Testis (tissue), 5 donors: ENCODE measurements at regions of chr12 and their contacts with region 1.

Region 1: GRCh38 chr12:94532490-94533422 is 73.1 kb upstream of the CEP83 start:
- DNase-seq: peak; percentile 85
- H3K4me3 ChIP-seq: no peak overlapping the region
- H3K27ac ChIP-seq: no peak overlapping the region
- H3K4me1 ChIP-seq: no peaks in the 10 kb centered on the region
- H3K27me3 ChIP-seq: no peaks in the 10 kb centered on the region
- CTCF ChIP-seq: peak; percentile 71 to 82 (median 81)
- POLR2A ChIP-seq: no peak

Region 2: GRCh38 chr12:94140556-94140955 is 392.2 kb before region 1 on chr12:
- intact Hi-C with region 1: loop called (anchors 5 kb)
- DNase-seq: no peak
- H3K4me3 ChIP-seq: no peak overlapping the region
- H3K27ac ChIP-seq: no peak overlapping the region
- H3K4me1 ChIP-seq: peaks cover under 1% of the 10 kb centered on the region
- H3K27me3 ChIP-seq: no peaks in the 10 kb centered on the region
- CTCF ChIP-seq: no peak
- POLR2A ChIP-seq: no peak

Region 3: GRCh38 chr12:94690198-94690771 is 157.5 kb after region 1 on chr12:
- intact Hi-C with region 1: no loop called
- DNase-seq: no peak
- H3K4me3 ChIP-seq: no peak overlapping the region
- H3K27ac ChIP-seq: peak overlapping the region in 1 of 2 donors; percentile 60
- H3K4me1 ChIP-seq: peaks cover 5% of the 10 kb centered on the region
- H3K27me3 ChIP-seq: no peaks in the 10 kb centered on the region
- CTCF ChIP-seq: no peak
- POLR2A ChIP-seq: no peak